Ascending aorta (tissue), 2 donors: ENCODE measurements at regions of chr3 and their contacts with region 1.

Region 1: DNA sequence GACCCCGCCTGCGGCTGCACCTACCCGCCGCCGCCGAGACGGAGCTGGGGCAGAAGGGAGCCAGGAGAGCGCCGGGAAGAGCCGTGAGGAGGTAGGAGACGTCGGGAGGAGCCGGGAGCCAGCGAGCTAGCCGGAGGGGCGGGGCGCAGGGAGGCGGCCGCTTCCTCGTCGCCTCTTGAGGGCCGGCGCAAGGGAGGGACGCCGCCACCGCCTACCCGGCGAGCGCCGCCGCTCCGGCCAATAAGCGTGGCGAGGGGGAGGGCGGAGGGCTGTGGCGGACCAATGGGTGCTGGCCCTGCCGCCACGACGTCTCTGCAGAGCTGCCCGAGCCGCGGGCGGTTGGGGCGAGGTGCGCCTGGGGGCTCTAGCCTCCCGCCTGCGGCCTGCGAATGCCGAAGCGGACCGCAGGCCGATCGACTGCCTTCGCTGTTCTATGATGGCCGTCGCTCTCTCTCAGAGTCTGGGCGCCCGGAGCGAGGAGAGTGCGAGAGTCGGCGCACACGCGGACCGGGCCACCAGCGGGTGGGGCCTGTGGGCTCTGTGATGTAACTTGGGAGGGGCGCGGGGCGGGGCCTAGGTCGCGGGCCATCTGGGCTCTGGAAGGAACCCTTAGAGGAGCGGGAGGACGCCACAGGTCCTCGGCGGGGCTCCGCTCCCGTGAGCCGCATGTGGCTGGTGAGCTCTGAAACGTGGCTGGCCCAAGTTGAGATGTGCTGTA is 72.7 kb upstream of the MAP4 start:
- DNase-seq: peak; percentile 87 to 98
- H3K4me3 ChIP-seq: peak overlapping the region; percentile 72 to 84
- H3K27ac ChIP-seq: peak overlapping the region; percentile 97 to 98
- H3K4me1 ChIP-seq: peaks cover 5 to 31% of the 10 kb centered on the region in 2 donors
- H3K27me3 ChIP-seq: no peaks in the 10 kb centered on the region
- CTCF ChIP-seq: peak in 1 of 3 experiments; percentile 15

Region 2: DNA sequence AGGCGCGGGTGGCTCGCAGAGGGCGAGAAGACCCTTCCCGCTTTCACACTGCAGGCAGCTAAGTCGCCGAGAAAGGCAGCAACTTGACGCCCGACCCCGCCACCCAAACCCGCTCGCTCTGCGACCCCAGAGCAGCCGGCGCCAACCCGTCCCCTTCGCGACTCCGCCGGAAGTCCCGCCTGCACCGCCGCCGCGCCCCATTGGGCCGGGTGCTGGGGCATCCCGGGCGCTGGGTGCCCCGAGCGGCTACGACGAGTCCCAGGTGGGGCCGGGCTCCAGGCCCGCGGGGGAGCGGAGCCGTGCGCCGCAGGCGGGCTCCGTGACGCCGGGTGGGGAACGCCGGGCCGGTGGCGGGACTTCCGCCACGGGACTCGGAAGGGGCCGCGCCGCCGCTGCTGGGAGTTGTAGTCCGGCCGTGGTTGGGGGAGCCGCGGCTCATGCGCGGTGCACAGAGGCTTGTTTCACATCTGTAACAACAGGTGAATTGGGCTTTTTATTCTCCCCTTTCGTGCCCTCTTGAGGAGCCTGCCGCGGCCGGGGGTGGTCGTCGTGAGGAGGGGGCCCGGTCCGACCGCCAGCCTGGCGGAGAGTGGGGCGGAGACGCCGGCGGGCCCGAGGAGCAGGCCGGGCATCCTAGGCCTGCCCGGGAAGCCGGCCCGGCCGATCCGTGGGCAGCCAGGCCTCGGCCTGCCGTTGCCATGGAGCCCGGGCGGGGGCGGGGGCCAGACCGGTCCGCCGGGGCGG is 286.0 kb before region 1 on chr3 and contains the start of gene DHX30:
- intact Hi-C with region 1: loop called (anchors 1 kb)
- DNase-seq: peak; percentile 62 to 93
- H3K4me3 ChIP-seq: peak within 1 kb of the TSS; percentile 94 to 97
- H3K27ac ChIP-seq: peak within 1 kb of the TSS; percentile 98 to 99
- H3K4me1 ChIP-seq: peaks cover 12 to 20% of the 10 kb centered on the region in 2 donors
- H3K27me3 ChIP-seq: no peaks in the 10 kb centered on the region
- CTCF ChIP-seq: no peak
- total RNA-seq, gene DHX30: 25.8 TPM

Region 3: GRCh38 chr3:47849699-47850563 is 239.0 kb before region 1 on chr3:
- intact Hi-C with region 1: no loop called
- DNase-seq: no peak
- H3K4me3 ChIP-seq: no peak overlapping the region
- H3K27ac ChIP-seq: no peak overlapping the region
- H3K4me1 ChIP-seq: no peaks in the 10 kb centered on the region
- H3K27me3 ChIP-seq: no peaks in the 10 kb centered on the region
- CTCF ChIP-seq: peak; percentile 24 to 39 (median 30)

Region 4: DNA sequence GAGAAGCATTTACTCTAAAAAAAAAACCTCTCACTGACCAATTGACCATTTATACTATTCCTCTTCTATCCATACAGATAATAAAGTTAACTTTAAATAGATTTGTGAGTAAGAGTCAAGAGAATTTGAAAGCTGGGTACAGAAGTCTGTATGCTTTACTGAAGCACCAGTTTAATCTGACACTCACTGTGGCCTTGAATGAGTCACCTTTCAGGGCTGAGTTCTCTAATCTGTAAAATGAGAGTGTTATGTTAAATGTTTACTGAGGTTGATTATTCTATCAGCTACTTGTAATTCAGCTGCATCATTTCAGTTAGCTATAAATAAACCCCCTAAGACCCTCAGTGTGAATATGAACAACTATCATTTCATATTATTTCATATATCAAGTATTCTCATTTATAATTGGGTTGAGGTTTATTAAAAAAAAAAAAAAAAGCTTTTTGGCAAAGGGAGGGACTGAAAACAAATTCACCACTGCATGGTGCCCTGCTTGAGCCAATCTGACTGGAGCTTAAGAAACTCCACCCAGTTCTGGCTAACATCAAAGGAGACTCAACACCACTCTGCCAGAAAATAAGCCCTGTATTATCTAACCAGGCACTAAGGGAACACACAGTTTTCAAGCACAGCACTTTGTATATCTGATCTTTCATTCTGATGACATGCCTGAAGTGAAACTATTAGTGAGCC is 75.5 kb before region 1 on chr3:
- intact Hi-C with region 1: loop called (anchors 2 kb)
- DNase-seq: no peak
- H3K4me3 ChIP-seq: no peak overlapping the region
- H3K27ac ChIP-seq: peak overlapping the region; percentile 76 to 83
- H3K4me1 ChIP-seq: peaks cover 17 to 69% of the 10 kb centered on the region in 2 donors
- H3K27me3 ChIP-seq: no peaks in the 10 kb centered on the region
- CTCF ChIP-seq: no peak

Region 5: GRCh38 chr3:48039487-48040190 is 49.3 kb before region 1 on chr3:
- intact Hi-C with region 1: loop called (anchors 2 kb)
- DNase-seq: no peak
- H3K4me3 ChIP-seq: peak overlapping the region in 1 of 2 donors; percentile 26
- H3K27ac ChIP-seq: peak overlapping the region; percentile 80 to 81
- H3K4me1 ChIP-seq: peaks cover 8 to 36% of the 10 kb centered on the region in 2 donors
- H3K27me3 ChIP-seq: no peaks in the 10 kb centered on the region
- CTCF ChIP-seq: no peak

Region 6: GRCh38 chr3:48119505-48120193 is 30.7 kb after region 1 on chr3:
- intact Hi-C with region 1: loop called (anchors 2 kb)
- DNase-seq: no peak
- H3K4me3 ChIP-seq: no peak overlapping the region
- H3K27ac ChIP-seq: peak overlapping the region in 1 of 2 donors; percentile 27
- H3K4me1 ChIP-seq: peaks cover 0 to 7% of the 10 kb centered on the region in 2 donors
- H3K27me3 ChIP-seq: no peaks in the 10 kb centered on the region
- CTCF ChIP-seq: no peak

Region 7: GRCh38 chr3:48151058-48151806 is 62.3 kb after region 1 on chr3:
- intact Hi-C with region 1: loop called (anchors 5 kb)
- DNase-seq: peak; percentile 26 to 87
- H3K4me3 ChIP-seq: no peak overlapping the region
- H3K27ac ChIP-seq: peak overlapping the region in 1 of 2 donors; percentile 74
- H3K4me1 ChIP-seq: peaks cover 0 to 3% of the 10 kb centered on the region in 2 donors
- H3K27me3 ChIP-seq: no peaks in the 10 kb centered on the region
- CTCF ChIP-seq: peak; percentile 84 to 90 (median 88)